ENCODE measurements at regions of chr17 and their contacts with region 1.

Region 1: DNA sequence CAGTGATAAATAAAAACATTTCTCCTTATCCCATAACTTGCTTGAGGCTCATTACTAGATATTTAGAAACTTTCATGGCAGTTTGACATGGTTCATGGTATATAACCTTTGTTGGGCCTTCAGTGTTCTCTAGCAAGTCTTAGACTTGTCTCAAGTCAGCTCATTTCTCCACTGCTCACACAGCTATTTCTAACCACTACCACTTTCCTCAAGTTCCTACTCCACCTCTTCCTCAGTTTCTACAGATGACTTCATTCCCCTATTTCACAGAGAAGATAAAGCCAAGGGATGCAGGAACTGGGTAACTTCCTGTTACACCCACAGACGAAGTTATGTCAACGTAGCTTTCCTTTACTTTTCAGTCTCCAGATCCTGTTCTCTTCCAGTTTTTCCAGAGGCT is 23.2 kb downstream of the NLK start:
- DNase-seq: peak; percentile 63
- H3K4me3 ChIP-seq: no peak overlapping the region
- H3K27ac ChIP-seq: no peak overlapping the region
- H3K4me1 ChIP-seq: peaks cover 19% of the 10 kb centered on the region
- H3K27me3 ChIP-seq: no peaks in the 10 kb centered on the region
- CTCF ChIP-seq: no peak
- POLR2A ChIP-seq: no peak

Region 2: DNA sequence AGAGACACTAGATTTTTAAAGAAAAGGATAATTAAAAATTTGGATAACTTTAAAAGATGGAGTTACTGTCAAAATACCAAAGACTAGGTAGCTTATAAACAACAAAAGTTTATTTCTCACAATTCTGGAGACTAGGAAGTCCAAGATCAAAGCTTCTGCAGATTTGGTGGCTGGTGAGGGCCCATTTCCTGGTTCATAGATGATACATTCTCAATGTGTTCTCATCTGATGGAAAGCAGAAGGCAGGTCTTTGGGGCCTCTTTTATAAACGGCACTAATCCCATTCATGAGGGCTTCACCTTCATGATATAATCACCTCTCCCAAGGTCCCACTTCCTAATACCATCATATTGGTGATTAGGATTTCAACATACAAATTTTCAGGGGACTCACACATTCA is 10.4 kb after region 1 on chr17:
- CTCF ChIA-PET with region 1: interaction called, 15 read pairs
- POLR2A ChIA-PET with region 1: no interaction called
- dilution Hi-C with region 1: no loop called
- intact Hi-C with region 1: no loop called
- DNase-seq: no peak
- H3K4me3 ChIP-seq: no peak overlapping the region
- H3K27ac ChIP-seq: no peak overlapping the region
- H3K4me1 ChIP-seq: no peaks in the 10 kb centered on the region
- H3K27me3 ChIP-seq: no peaks in the 10 kb centered on the region
- CTCF ChIP-seq: no peak
- POLR2A ChIP-seq: no peak

Region 3: GRCh38 chr17:28112220-28113005 is 46.7 kb after region 1 on chr17:
- CTCF ChIA-PET with region 1: no interaction called
- POLR2A ChIA-PET with region 1: no interaction called
- dilution Hi-C with region 1: no loop called
- intact Hi-C with region 1: no loop called
- DNase-seq: peak; percentile 62
- H3K4me3 ChIP-seq: no peak overlapping the region
- H3K27ac ChIP-seq: peak overlapping the region; percentile 13
- H3K4me1 ChIP-seq: peaks cover 21% of the 10 kb centered on the region
- H3K27me3 ChIP-seq: no peaks in the 10 kb centered on the region
- CTCF ChIP-seq: no peak
- POLR2A ChIP-seq: no peak

Measured in endothelial cell of umbilical vein (primary cell).